ENCODE measurements at regions of chr7 and their contacts with region 1.

Region 1: DNA sequence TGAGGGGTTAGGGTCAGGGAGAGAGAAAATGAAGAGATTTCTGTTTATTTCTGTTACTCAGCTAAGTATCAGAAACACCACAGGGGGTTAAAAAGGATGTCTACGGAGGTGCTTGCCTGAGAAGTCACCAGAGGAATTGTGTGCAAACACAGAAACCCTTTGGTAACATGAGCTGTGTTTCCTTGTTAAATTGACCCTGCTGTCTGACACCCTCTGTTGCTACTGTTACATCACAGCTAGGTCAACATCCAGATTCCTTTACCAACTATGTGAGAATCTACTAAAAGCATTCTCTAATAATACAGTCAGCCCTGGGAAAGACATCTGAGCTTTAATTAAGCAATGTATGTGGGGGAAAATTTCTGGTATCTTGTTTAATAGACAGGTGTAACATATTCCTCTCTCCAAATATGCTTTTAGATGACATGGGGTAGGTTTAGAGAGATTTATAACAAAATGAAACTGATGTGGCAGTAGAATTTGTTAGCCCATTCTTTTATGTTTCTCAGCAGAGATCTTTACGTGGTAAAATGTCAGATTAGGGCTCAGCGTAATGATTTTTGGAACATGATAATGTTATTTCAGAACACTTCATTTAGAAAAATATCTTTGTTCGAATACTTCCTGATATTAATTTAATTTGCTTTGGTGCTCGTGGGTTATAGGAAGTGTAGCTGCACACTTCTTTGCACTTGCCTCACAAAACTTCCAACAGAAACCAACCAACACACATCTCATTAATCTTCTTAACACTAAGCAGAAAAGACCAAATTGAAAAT is 168.0 kb upstream of the AHR start:
- DNase-seq: peak; percentile 78
- H3K4me3 Mint-ChIP-seq: peak overlapping the region; percentile 62
- H3K27ac Mint-ChIP-seq: peak overlapping the region; percentile 100
- H3K4me1 Mint-ChIP-seq: peaks cover 86% of the 10 kb centered on the region
- H3K27me3 Mint-ChIP-seq: no peaks in the 10 kb centered on the region
- CTCF ChIP-seq: no peak

Region 2: DNA sequence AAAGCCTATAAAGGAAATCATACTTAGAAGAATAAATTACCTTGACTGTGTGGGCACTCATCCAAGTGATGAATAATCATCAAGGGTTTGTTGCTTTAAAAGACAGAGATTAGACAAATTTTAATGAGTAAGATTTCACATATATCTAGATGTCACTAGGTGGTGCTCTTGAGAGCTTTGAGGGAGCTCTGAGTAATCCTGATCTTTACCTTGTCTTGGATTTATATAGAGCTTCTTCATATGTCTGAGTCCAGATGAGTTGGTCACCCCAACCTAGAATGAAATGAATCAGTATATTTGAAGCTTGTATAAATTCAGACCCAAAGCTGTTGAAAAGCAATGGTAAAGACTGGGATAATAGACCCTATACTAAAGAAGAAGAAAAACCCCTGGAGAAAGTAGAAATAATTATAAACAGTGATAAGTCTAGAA is 329.3 kb before region 1 on chr7:
- CTCF ChIA-PET with region 1: no interaction called
- intact Hi-C with region 1: loop called (anchors 10 kb)
- DNase-seq: no peak
- H3K4me3 Mint-ChIP-seq: peak overlapping the region; percentile 80
- H3K27ac Mint-ChIP-seq: peak overlapping the region; percentile 63
- H3K4me1 Mint-ChIP-seq: peaks cover 18% of the 10 kb centered on the region
- H3K27me3 Mint-ChIP-seq: no peaks in the 10 kb centered on the region
- CTCF ChIP-seq: peak; percentile 49

Region 3: DNA sequence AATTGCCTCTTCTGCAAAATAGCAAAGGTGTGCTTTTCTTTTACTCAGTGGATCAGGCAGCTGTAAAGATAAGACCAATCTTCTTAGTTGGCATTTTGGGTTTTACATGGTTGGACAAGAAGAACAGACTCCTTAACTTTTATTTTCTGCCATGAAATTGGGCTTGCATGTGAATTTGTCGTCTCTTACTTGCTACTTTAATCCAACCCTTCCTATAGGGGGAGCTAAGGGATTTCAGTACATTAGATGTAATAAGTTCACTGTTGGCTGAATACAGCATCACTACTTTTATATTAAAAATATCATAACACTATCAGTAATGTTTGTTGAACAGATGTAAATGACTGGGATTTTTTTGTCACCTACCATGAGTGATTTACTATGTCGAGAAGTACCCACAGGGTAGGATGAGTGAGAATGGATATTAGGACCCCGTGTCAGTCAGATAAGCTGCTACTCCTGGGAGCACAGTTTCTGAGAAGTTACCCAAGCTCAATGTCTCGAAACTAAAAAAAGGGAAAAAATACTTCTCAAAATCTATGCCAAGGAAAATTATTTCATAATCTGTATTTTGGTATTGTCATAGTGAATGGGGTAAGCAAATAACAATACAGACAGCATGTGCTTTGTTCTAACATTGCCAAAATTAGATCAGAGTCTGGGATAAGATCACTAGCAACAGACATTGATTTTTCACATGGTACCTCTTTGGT is 121.3 kb before region 1 on chr7:
- CTCF ChIA-PET with region 1: interaction called, 22 read pairs
- intact Hi-C with region 1: loop called (anchors 2 kb)
- DNase-seq: no peak
- H3K4me3 Mint-ChIP-seq: no peak overlapping the region
- H3K27ac Mint-ChIP-seq: peak overlapping the region; percentile 58
- H3K4me1 Mint-ChIP-seq: peaks cover 87% of the 10 kb centered on the region
- H3K27me3 Mint-ChIP-seq: no peaks in the 10 kb centered on the region
- CTCF ChIP-seq: peak; percentile 67

Region 4: GRCh38 chr7:17063045-17063383 is 67.5 kb before region 1 on chr7:
- CTCF ChIA-PET with region 1: interaction called, 17 read pairs
- intact Hi-C with region 1: loop called (anchors 2 kb)
- DNase-seq: no peak
- H3K4me3 Mint-ChIP-seq: no peak overlapping the region
- H3K27ac Mint-ChIP-seq: no peak overlapping the region
- H3K4me1 Mint-ChIP-seq: peaks cover 34% of the 10 kb centered on the region
- H3K27me3 Mint-ChIP-seq: no peaks in the 10 kb centered on the region
- CTCF ChIP-seq: peak; percentile 40

Region 5: DNA sequence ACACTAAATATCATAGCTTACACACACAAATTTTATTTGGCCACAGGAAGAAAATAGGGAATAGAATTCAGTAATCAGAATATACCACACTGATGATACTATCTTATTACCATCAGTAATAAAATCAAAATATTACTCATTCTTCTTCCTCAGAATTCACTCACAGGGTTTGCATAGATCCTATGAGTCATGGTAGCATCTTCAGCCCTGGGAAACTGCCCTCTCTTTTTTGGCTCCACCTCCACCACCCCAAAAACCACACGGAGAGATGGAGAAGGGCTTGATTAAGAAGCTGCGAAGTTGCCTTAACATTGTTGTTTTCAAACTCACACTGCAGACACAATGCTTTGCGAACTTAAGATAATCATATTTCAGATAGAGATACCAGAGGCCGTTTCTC is 13.9 kb after region 1 on chr7:
- CTCF ChIA-PET with region 1: interaction called, 17 read pairs
- intact Hi-C with region 1: no loop called
- DNase-seq: no peak
- H3K4me3 Mint-ChIP-seq: peak overlapping the region; percentile 36
- H3K27ac Mint-ChIP-seq: peak overlapping the region; percentile 100
- H3K4me1 Mint-ChIP-seq: peaks cover 66% of the 10 kb centered on the region
- H3K27me3 Mint-ChIP-seq: no peaks in the 10 kb centered on the region
- CTCF ChIP-seq: no peak

Region 6: GRCh38 chr7:17298207-17298839 is 167.9 kb after region 1 on chr7 and contains the start of gene AHR:
- CTCF ChIA-PET with region 1: interaction called, 15 read pairs
- intact Hi-C with region 1: loop called (anchors 2 kb)
- DNase-seq: peak; percentile 96
- H3K4me3 Mint-ChIP-seq: peak within 1 kb of the TSS; percentile 85
- H3K27ac Mint-ChIP-seq: peak within 1 kb of the TSS; percentile 93
- H3K4me1 Mint-ChIP-seq: peaks cover 28% of the 10 kb centered on the region
- H3K27me3 Mint-ChIP-seq: no peaks in the 10 kb centered on the region
- CTCF ChIP-seq: no peak
- total RNA-seq, gene AHR: 280 and 288 TPM in 2 replicates

Region 7: DNA sequence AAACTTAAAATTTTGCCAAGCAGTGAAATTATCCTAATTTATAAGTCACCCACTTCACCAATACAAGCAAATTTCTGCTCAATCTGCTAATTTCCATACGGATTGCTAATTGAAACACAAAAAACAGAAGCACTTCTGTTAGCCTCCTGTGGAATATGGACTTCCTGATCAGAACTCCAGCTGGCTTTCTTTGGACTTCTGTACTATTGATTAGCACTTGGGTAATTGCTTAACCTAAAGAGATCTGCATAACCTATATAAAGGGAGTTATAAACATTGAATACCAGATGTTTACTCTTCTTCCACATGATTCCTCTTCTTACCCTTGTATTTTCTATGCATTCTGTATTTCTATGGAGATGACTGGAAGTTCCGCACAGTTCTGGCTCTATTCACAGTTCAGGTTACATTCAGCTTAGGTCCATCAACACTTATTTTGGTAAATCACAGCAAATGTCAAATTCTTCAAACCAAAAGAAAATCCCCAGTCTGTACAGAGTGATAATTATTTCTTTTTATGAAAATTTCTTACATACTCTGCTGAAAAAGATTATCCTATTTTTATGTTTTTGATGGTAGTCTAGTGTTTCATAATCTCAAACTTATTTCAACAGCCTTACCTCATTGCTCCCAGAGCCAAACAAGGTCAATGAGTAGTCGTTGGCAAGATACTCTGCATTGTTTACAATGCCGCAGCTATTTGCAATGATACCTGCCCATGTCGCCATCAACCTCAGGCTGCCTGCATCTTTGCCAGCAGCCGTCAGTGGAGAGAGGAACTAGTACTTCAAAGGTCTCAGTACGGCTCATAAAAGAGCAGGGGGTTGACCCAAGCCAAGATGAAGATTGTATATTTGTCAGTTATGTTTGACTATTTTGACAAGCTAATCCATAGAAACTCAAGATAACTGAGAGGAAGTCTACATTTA is 393.6 kb after region 1 on chr7:
- CTCF ChIA-PET with region 1: interaction called, 4 read pairs
- intact Hi-C with region 1: loop called (anchors 5 kb)
- DNase-seq: peak; percentile 73
- H3K4me3 Mint-ChIP-seq: peak overlapping the region; percentile 33
- H3K27ac Mint-ChIP-seq: peak overlapping the region; percentile 96
- H3K4me1 Mint-ChIP-seq: peaks cover 82% of the 10 kb centered on the region
- H3K27me3 Mint-ChIP-seq: no peaks in the 10 kb centered on the region
- CTCF ChIP-seq: no peak

Measured in Calu3 (cell line).